KBM-7 (cell line): ENCODE measurements at regions of chr15 and their contacts with region 1.

Region 1: DNA sequence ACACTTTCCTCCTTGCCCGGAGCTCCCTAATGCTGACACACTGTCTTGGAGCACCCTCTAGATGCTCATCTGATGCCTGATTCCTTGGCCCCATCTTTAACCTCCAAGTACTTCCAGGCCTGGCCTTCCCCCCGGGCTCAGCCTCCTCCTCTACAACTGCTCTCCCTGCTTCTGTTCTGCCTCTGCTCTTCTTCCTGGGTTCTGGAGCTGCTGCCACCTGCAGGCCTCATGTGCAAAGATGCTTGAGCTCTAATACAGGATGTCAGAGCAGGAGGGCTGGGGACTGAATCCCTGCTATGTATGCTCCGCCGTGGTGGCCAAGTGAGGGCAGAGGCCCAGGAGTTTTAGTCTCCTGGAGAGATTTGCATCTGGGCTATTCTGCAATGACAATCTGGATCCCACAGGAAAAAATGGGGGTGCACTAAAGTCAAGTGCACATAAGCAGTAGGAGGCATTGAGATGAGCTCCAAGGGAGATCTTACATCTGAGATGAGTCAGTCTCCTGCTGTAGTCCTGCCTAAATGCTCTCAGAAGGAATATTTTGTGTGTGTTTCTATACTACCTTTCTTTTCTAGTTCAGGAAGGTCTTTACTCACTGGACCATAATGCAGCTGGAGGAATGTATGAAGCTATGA is 296.3 kb downstream of the UACA start:
- DNase-seq: peak; percentile 82

Region 2: GRCh38 chr15:69729161-69729748 is 737.8 kb before region 1 on chr15:
- in situ Hi-C with region 1: loop called (anchors 25 kb)
- DNase-seq: peak; percentile 64